PC-9 (cell line): ENCODE measurements at regions of chr4 and their contacts with region 1.

Region 1: GRCh38 chr4:124060261-124060918 is 652.1 kb downstream of the ANKRD50 start:
- DNase-seq: peak; percentile 26 to 42
- H3K4me3 ChIP-seq: no peak overlapping the region
- H3K27ac ChIP-seq: peak overlapping the region; percentile 13; the same call in 1 of the 2 replicates
- H3K4me1 ChIP-seq: peaks cover 16% of the 10 kb centered on the region
- H3K27me3 ChIP-seq: no peaks in the 10 kb centered on the region
- CTCF ChIP-seq: no peak

Region 2: DNA sequence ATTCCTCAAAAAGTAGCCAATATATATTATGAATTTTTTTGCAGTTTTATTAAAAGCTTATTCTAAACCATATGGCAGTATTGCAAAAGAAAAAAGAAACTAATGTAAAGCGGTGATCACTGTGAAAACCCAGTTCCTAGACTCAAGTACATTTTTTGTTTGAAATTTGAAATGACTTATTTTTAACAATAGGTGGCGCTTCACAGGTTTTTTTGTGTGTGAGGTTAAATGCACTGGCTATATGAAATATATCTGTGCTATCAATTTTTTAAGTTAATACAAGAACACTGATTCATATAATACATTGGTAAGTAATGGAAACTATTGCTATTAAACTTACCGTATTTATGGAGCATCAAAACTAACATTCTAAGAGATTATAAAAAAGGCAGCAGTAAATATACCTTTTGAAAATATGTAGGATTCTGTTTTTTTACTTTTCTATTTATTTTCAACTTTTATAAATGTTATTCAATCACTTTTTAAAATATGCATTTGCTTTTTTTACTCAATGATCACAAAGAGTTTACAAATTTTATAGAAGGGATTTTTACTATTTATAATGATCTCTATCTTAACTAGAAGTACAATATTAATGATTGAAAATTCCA is 669.4 kb before region 1 on chr4:
- CTCF ChIA-PET with region 1: no interaction called
- POLR2A ChIA-PET with region 1: no interaction called
- intact Hi-C with region 1: loop called (anchors 2 kb)
- DNase-seq: no peak
- H3K4me3 ChIP-seq: no peak overlapping the region
- H3K27ac ChIP-seq: no peak overlapping the region
- H3K4me1 ChIP-seq: peaks cover 4% of the 10 kb centered on the region
- H3K27me3 ChIP-seq: no peaks in the 10 kb centered on the region
- CTCF ChIP-seq: peak; percentile 76

Region 3: GRCh38 chr4:123689341-123689740 is 371.0 kb before region 1 on chr4:
- CTCF ChIA-PET with region 1: no interaction called
- POLR2A ChIA-PET with region 1: no interaction called
- intact Hi-C with region 1: no loop called
- DNase-seq: no peak
- H3K4me3 ChIP-seq: no peak overlapping the region
- H3K27ac ChIP-seq: no peak overlapping the region
- H3K4me1 ChIP-seq: no peaks in the 10 kb centered on the region
- H3K27me3 ChIP-seq: no peaks in the 10 kb centered on the region
- CTCF ChIP-seq: no peak

Region 4: GRCh38 chr4:124035364-124036041 is 24.9 kb before region 1 on chr4:
- CTCF ChIA-PET with region 1: no interaction called
- POLR2A ChIA-PET with region 1: no interaction called
- intact Hi-C with region 1: loop called (anchors 2 kb)
- DNase-seq: no peak
- H3K4me3 ChIP-seq: no peak overlapping the region
- H3K27ac ChIP-seq: no peak overlapping the region
- H3K4me1 ChIP-seq: no peaks in the 10 kb centered on the region
- H3K27me3 ChIP-seq: no peaks in the 10 kb centered on the region
- CTCF ChIP-seq: no peak

Region 5: GRCh38 chr4:124085561-124086180 is 25.3 kb after region 1 on chr4:
- CTCF ChIA-PET with region 1: no interaction called
- POLR2A ChIA-PET with region 1: no interaction called
- intact Hi-C with region 1: no loop called
- DNase-seq: no peak
- H3K4me3 ChIP-seq: no peak overlapping the region
- H3K27ac ChIP-seq: no peak overlapping the region
- H3K4me1 ChIP-seq: peaks cover 11% of the 10 kb centered on the region
- H3K27me3 ChIP-seq: no peaks in the 10 kb centered on the region
- CTCF ChIP-seq: no peak